ENCODE measurements at regions of chr2 and their contacts with region 1.

Region 1: DNA sequence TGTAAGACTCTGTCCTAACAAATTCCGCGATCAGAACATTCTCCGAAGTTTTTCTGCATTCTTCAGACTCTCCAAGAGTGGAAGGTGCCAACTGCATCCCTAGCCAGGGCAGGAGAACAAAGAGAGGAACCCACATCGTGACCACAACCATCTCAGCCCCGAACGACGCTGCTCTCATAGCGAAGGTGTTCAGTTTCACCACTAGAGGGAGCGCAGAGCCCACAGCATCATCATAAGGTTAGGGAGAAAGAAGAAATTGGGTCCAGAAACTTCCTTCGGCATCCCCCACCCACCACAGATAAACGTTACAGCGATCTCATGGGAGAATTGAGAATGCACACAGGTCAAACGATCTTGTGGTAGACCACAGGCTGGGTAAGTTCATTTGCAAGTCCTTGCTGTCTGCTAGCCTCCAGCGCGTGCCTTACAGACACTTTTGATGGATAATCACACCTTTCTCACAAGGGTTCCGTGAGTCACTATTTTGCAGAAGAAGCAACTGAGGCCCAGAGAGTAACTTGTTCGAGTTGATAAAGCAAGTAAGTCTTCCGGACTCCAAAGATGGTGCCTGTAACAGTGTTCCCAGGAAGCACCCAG is 53.7 kb upstream of the ARL4C start:
- DNase-seq: peak; percentile 60 to 73 (median 66)
- H3K4me3 ChIP-seq: no peak overlapping the region
- H3K27ac ChIP-seq: no peak overlapping the region
- H3K4me1 ChIP-seq: no peaks in the 10 kb centered on the region
- H3K27me3 ChIP-seq: no peaks in the 10 kb centered on the region
- CTCF ChIP-seq: peak; percentile 73 to 90 (median 87)
- EP300 ChIP-seq: no peak
- POLR2A ChIP-seq: no peak

Region 2: DNA sequence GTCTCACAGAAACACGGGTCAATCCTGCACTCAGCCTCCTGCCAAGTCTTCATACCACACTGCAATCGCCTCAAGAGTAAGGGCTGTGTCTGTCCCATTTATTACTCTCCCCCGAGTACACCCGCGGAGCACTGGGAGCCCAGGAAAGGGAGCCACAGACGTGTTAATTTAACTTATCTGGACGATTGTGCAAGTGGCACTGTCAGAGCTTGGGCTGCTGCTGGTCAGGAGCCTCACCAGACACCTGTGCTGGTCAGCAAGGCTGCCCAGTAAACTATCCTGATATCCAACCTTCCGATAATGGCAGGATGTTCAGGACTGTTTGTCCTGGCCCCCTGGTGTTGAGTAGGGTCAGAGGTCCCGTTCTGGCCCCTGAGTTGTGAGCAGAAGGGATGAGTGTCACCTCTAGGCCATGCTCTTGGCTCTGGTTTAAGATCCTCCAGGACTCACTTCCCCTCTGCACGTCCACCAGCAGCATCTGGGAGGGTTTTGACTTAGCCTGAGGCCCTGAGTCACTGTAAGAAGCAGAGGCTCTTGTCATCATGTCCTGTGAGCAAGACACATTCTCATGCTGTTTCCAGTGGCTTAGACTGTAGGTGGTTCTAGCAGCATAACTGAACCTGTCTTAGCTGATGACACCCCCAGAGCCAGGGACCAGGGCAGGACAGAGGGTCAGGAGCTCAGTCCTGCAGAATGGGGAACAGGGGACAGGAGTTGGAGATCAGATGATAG is 28.8 kb after region 1 on chr2:
- intact Hi-C with region 1: no loop called
- DNase-seq: no peak
- H3K4me3 ChIP-seq: no peak overlapping the region
- H3K27ac ChIP-seq: no peak overlapping the region
- H3K4me1 ChIP-seq: no peaks in the 10 kb centered on the region
- H3K27me3 ChIP-seq: no peaks in the 10 kb centered on the region
- CTCF ChIP-seq: no peak
- EP300 ChIP-seq: no peak
- POLR2A ChIP-seq: no peak

Region 3: DNA sequence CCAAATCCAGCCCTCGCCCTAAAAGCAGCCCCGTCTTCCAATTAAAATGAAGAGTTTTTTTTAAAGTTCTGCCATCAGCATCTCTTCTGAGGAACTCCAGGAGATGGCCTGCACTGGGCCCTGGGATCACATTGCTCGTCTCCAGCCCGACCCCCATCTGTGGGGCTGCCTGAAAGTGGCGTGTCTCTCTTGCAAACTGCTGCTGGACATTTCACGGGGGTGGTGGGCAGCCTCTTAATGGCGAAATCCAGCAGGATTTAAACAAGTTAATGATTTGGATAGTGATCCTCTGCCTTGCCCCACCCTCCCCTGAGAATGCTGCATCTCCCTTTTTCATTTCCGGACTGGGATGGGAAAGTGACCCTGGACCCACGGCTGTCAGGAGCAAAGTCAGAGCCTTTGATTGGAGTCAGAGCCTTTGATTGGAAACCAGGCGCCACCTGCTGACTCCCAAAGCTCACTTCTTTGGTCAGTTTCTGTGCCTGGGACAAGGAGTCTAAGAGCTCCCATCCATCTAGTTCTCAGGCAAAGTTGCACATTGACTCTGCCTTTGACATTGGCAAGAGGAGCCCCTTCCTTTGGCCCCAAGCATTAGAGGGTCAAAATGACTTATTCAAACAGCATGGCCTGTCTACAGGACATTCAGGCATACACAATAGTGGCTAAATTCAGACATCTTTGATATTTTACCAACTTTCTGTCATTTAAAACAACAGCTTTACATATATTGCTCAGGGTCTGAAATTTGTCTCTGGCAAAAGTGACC is 556.4 kb after region 1 on chr2:
- intact Hi-C with region 1: loop called in 3 of 4 experiments (anchors 5 kb)
- DNase-seq: peak; percentile 52 to 76 (median 64)
- H3K4me3 ChIP-seq: no peak overlapping the region
- H3K27ac ChIP-seq: no peak overlapping the region
- H3K4me1 ChIP-seq: no peaks in the 10 kb centered on the region
- H3K27me3 ChIP-seq: no peaks in the 10 kb centered on the region
- CTCF ChIP-seq: peak; percentile 24 to 60 (median 55)
- EP300 ChIP-seq: no peak
- POLR2A ChIP-seq: no peak

Region 4: GRCh38 chr2:235116885-235117492 is 566.4 kb after region 1 on chr2:
- intact Hi-C with region 1: loop called in 1 of 4 experiments (anchors 5 kb)
- DNase-seq: no peak
- H3K4me3 ChIP-seq: no peak overlapping the region
- H3K27ac ChIP-seq: no peak overlapping the region
- H3K4me1 ChIP-seq: no peaks in the 10 kb centered on the region
- H3K27me3 ChIP-seq: no peaks in the 10 kb centered on the region
- CTCF ChIP-seq: peak in 2 of 3 donors; percentile 61 to 65
- EP300 ChIP-seq: no peak
- POLR2A ChIP-seq: no peak

Measured in ovary (tissue), 10 donors.